Adrenal gland (tissue), 19 donors: ENCODE measurements at regions of chr2 and their contacts with region 1.

Region 1: GRCh38 chr2:72745679-72746368 is 80.0 kb downstream of the EXOC6B start:
- DNase-seq: peak in 1 of 7 donors; percentile 26
- H3K4me3 ChIP-seq: no peak overlapping the region
- H3K27ac ChIP-seq: no peak overlapping the region
- H3K4me1 ChIP-seq: peaks cover 7 to 8% of the 10 kb centered on the region in 2 donors
- H3K27me3 ChIP-seq: no peaks in the 10 kb centered on the region
- CTCF ChIP-seq: peak; percentile 48 to 84 (median 70)
- POLR2A ChIP-seq: no peak

Region 2: GRCh38 chr2:71910277-71910676 is 835.5 kb before region 1 on chr2:
- intact Hi-C with region 1: no loop called
- DNase-seq: no peak
- H3K4me3 ChIP-seq: no peak overlapping the region
- H3K27ac ChIP-seq: no peak overlapping the region
- H3K4me1 ChIP-seq: no peaks in the 10 kb centered on the region
- H3K27me3 ChIP-seq: peaks cover 9% of the 10 kb centered on the region
- CTCF ChIP-seq: no peak
- POLR2A ChIP-seq: no peak

Region 3: DNA sequence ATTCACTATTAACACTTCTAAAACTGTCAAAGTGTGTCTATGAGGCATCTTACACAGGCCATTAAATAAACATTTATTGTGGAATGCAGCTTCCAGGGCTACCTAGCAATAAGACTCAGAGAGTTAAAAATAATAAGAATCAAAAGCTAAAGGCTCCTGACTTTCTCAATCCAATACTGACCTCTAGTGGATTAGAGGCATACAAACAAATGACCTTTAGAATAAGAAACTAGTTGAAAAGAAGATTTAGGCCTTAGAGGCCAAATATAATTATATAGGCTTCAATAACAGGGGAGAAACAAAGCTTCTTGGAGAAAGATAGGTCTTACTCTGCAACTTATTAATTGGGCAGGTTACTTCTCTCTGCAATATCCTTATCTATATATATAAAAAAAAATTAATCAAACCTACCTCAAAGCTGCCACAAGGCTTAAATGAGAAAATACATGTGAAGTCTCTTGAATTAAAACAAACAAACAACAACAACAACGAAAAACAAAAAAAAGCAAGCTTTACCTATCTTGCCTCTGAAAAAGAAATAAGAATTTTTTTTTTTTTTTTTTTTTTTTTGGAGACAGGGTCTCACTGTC is 166.1 kb before region 1 on chr2:
- intact Hi-C with region 1: loop called in 1 of 2 experiments (anchors 10 kb)
- DNase-seq: no peak
- H3K4me3 ChIP-seq: no peak overlapping the region
- H3K27ac ChIP-seq: no peak overlapping the region
- H3K4me1 ChIP-seq: peaks cover 0 to 14% of the 10 kb centered on the region in 2 donors
- H3K27me3 ChIP-seq: no peaks in the 10 kb centered on the region
- CTCF ChIP-seq: peak; percentile 46 to 79 (median 70)
- POLR2A ChIP-seq: no peak